ENCODE measurements at regions of chr9 and their contacts with region 1.

Region 1: GRCh38 chr9:127785023-127785932 is 556 bp upstream of the CDK9 start:
- DNase-seq: peak; percentile 83 to 87
- H3K4me3 ChIP-seq: peak overlapping the region in 2 of 3 donors; percentile 68 to 91
- H3K27ac ChIP-seq: peak overlapping the region; percentile 87 to 92 (median 92)
- H3K4me1 ChIP-seq: peaks cover 8 to 34% of the 10 kb centered on the region in 2 donors
- H3K27me3 ChIP-seq: no peaks in the 10 kb centered on the region
- CTCF ChIP-seq: peak; percentile 72 to 95 (median 86)
- POLR2A ChIP-seq: no peak

Region 2: GRCh38 chr9:127869310-127870152 is 84.3 kb after region 1 on chr9:
- intact Hi-C with region 1: loop called (anchors 10 kb)
- DNase-seq: peak; percentile 84 to 89
- H3K4me3 ChIP-seq: no peak overlapping the region
- H3K27ac ChIP-seq: no peak overlapping the region
- H3K4me1 ChIP-seq: peaks cover 19 to 23% of the 10 kb centered on the region in 2 donors
- H3K27me3 ChIP-seq: no peaks in the 10 kb centered on the region
- CTCF ChIP-seq: peak; percentile 64 to 94 (median 82)
- POLR2A ChIP-seq: no peak

Region 3: DNA sequence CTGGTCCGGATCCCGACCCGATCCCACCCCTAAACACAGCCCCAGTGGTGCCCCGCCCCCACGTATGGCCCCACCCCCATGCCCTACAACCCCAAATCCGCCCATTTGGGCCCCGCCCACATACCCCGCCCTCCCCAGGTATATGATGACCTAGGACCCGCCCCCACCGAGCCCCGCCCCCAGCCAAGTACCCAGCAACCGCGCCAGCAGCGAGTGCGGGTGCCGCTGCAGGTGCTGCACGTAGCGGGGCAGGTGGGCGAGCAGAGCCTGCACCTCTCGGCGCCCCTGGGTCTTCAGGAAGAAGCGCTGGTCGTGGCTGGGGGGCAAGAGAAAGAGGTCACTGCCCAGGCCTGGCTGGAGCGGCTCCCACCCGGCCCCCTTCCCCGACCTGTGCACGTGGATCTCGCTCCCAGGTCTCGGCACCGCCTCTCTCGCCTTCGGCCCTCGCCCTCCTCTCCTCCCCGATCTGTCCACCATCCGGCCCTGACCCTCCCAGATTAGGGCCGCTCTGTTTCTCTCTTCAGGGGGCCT is 142.2 kb after region 1 on chr9:
- intact Hi-C with region 1: loop called (anchors 5 kb)
- DNase-seq: peak in 1 of 2 donors; percentile 64
- H3K4me3 ChIP-seq: no peak overlapping the region
- H3K27ac ChIP-seq: no peak overlapping the region
- H3K4me1 ChIP-seq: peaks cover 26 to 33% of the 10 kb centered on the region in 2 donors
- H3K27me3 ChIP-seq: no peaks in the 10 kb centered on the region
- CTCF ChIP-seq: no peak
- POLR2A ChIP-seq: no peak